ENCODE measurements at regions of chr3 and their contacts with region 1.

Region 1: GRCh38 chr3:8324740-8325139 is 176.9 kb upstream of the LMCD1 start:
- DNase-seq: peak; percentile 48 to 77
- ATAC-seq: no peak
- H3K4me3 ChIP-seq: no peak overlapping the region
- H3K27ac ChIP-seq: no peak overlapping the region
- H3K4me1 ChIP-seq: no peaks in the 10 kb centered on the region
- H3K27me3 ChIP-seq: no peaks in the 10 kb centered on the region

Region 2: DNA sequence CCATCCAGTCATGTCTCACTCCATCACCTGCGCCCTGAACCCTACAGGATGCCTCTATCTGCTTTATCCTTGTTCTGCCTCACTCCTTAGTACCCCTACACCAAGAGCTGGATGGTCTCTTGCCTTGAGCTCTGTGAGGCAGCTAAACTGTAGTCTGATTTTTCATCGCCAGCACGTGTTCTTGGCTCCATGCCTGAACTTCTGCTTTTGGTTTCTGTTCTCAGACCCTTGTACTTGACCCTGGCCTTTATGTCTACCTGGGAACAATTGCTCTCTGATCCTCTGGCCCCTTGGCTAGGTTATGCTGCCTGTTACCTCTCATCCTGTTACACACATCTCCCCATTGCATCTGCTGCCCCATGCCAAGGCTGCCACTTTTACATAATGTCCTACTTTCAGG is 141.1 kb before region 1 on chr3:
- intact Hi-C with region 1: no loop called
- DNase-seq: no peak
- ATAC-seq: no peak
- H3K4me3 ChIP-seq: no peak overlapping the region
- H3K27ac ChIP-seq: no peak overlapping the region
- H3K4me1 ChIP-seq: peaks cover 0 to 2% of the 10 kb centered on the region in 2 donors
- H3K27me3 ChIP-seq: no peaks in the 10 kb centered on the region

Region 3: DNA sequence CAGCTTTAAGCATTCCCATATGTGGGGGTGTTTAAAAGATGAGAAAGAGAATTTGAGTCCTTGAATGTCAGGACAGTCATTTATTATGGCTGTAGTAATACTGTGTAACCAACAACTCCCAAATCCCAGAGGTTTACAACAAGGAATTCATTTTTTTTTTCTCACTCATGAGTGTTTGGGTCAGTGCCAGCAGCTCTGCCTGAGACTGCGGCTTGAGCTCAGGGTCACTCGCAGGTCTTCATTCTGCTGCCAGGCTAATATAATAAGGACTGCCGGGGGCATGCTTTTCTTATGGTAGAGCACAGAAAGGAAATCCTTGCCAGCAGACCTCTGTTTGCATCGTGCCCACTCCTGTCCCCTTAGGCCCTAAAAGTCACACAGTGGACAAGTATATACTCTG is 101.0 kb before region 1 on chr3:
- intact Hi-C with region 1: no loop called
- DNase-seq: peak; percentile 54 to 71
- ATAC-seq: peak; percentile 29
- H3K4me3 ChIP-seq: no peak overlapping the region
- H3K27ac ChIP-seq: no peak overlapping the region
- H3K4me1 ChIP-seq: no peaks in the 10 kb centered on the region
- H3K27me3 ChIP-seq: no peaks in the 10 kb centered on the region

Region 4: DNA sequence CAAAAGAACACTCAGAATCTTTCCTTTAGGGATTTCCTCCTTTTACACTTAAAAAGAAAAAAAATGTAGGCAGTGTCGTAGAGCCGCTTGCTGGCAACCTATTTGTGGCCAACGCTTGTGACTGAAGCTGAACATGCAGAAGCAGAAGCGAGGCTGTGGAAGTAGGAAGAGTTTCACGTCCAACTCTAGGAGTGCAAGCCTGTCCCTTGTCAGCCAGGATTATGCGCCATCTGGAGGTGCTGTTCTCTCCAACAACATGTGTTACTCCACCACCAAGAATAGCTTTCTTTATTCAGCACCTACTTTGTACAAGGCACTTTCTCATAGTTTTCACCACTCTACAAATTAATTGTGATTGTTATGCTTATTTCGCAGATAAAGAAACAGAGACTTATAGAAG is 46.3 kb before region 1 on chr3:
- intact Hi-C with region 1: no loop called
- DNase-seq: peak in 1 of 2 donors; percentile 50
- ATAC-seq: no peak
- H3K4me3 ChIP-seq: no peak overlapping the region
- H3K27ac ChIP-seq: no peak overlapping the region
- H3K4me1 ChIP-seq: peaks cover 0 to 4% of the 10 kb centered on the region in 2 donors
- H3K27me3 ChIP-seq: no peaks in the 10 kb centered on the region

Region 5: DNA sequence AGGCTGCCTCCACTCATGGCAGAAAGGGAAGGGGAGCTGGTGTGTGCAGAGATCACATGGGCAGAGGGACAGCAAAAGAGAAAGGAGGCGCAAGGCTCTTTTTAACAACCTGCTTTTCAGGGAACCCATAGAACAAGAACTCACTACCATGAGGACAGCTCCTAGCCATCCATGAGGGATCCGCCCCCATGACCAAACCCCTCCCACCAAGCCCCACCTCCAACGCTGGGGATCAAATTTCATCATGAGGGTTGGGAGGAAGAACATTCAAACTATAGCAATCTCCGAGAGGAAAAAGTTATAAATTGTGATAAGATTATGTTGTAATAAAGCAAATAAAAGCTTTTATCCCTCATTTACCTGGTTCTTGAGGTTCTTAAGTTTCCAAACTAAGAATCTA is 92.2 kb after region 1 on chr3:
- intact Hi-C with region 1: loop called (anchors 2 to 5 kb)
- DNase-seq: no peak
- ATAC-seq: no peak
- H3K4me3 ChIP-seq: no peak overlapping the region
- H3K27ac ChIP-seq: no peak overlapping the region
- H3K4me1 ChIP-seq: no peaks in the 10 kb centered on the region
- H3K27me3 ChIP-seq: no peaks in the 10 kb centered on the region

Region 6: DNA sequence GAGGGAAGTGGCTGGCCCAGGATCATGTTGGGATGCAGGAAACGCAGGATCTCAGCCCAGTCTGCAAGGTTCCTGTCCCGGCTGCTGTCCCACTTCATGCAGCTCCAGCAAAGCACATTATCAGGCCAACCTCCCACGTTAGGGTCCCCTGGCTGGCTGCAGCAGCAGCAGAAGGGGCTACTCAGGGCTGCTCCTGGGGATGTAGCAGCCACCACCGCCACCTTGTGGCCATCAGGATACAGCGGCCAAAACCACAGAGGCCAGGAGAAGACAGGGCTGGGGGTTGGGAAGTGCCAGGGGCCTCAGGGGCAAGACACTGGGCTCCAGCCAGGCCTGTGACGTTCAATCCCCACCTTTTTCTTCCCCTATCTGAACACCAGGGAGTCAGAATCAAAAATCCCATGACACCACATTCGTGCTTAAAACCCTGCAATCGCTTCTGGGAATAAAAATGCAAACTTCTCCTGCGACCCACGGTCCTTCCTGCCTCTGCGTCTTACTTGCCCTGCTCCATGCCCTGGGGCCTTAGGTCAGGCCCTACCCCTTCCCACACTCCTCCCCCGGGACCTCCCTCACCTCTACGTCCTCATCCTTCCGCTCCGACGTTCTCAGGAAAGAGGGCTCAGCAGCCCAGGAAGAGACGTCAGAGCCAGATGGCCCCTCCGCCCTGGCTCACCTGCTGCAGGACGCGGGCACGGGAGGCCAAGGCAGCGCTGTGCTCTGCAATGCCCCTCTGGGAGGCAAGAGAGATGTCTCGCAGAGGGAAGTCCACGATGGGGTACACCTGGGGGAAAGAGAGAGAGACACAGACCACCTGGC is 298.3 kb after region 1 on chr3:
- intact Hi-C with region 1: loop called in 1 of 2 experiments (anchors 10 kb)
- DNase-seq: peak; percentile 73 to 89
- ATAC-seq: peak; percentile 87
- H3K4me3 ChIP-seq: no peak overlapping the region
- H3K27ac ChIP-seq: no peak overlapping the region
- H3K4me1 ChIP-seq: no peaks in the 10 kb centered on the region
- H3K27me3 ChIP-seq: no peaks in the 10 kb centered on the region